ENCODE measurements at regions of chr12 and their contacts with region 1.

Region 1: DNA sequence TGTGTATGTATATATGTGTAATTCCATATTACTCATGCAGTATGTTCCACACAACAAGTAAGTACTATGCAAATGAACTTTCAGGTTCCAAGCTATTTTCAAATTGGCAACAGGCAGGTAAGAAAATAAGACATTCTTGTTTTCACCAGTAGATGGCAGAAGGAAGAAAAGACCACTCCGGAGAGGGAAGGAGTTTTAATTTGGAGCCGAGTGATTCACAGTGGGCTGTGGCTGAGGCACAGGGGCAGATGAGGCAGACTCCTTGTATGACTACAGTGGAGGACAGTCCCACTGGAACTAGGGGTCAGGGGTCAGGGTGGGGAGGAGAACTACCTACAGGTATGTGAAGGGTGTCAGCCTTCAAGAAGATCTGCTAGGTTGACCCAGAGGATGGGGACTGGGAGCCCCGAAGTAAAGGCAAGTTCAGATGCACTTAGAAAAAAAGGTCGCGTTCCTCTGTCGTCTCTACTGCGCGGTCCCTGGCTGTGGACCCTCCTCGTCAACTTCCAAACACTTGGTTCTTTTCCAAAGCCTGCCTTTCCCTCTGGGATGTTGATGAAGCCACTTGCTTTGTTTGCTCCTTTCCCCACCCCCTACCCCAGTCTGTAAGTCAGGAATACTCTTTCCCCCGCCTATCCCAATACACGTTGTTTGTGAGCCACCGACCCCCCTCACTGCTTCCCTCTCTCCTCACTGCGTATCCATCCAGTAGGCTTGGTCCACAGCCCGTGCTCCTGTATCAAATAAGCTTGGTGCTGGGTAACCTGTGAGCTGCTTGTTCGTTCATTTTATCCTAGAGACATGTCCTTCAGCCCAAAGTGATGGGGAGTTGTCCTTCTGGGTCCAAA is 24.1 kb downstream of the DDX47 start:
- DNase-seq: peak; percentile 83
- H3K4me3 Mint-ChIP-seq: no peak overlapping the region
- H3K27ac Mint-ChIP-seq: peak overlapping the region; percentile 30
- H3K4me1 Mint-ChIP-seq: peaks cover 56% of the 10 kb centered on the region
- H3K27me3 Mint-ChIP-seq: no peaks in the 10 kb centered on the region
- CTCF ChIP-seq: peak; percentile 62

Region 2: DNA sequence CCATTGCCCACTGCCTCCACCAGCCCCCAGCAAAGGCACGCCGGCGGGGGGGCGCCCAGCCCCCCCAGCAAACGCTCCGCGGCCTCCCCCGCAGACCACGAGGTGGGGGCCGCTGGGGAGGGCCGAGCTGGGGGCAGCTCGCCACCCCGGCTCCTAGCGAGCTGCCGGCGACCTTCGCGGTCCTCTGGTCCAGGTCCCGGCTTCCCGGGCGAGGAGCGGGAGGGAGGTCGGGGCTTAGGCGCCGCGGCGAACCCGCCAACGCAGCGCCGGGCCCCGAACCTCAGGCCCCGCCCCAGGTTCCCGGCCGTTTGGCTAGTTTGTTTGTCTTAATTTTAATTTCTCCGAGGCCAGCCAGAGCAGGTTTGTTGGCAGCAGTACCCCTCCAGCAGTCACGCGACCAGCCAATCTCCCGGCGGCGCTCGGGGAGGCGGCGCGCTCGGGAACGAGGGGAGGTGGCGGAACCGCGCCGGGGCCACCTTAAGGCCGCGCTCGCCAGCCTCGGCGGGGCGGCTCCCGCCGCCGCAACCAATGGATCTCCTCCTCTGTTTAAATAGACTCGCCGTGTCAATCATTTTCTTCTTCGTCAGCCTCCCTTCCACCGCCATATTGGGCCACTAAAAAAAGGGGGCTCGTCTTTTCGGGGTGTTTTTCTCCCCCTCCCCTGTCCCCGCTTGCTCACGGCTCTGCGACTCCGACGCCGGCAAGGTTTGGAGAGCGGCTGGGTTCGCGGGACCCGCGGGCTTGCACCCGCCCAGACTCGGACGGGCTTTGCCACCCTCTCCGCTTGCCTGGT is 120.3 kb before region 1 on chr12 and contains the start of gene CDKN1B:
- CTCF ChIA-PET with region 1: interaction called, 3 read pairs
- POLR2A ChIA-PET with region 1: interaction called, 11 read pairs
- intact Hi-C with region 1: no loop called
- DNase-seq: peak; percentile 96
- H3K4me3 Mint-ChIP-seq: peak within 1 kb of the TSS; percentile 98
- H3K27ac Mint-ChIP-seq: peak within 1 kb of the TSS; percentile 99
- H3K4me1 Mint-ChIP-seq: peaks cover 29% of the 10 kb centered on the region
- H3K27me3 Mint-ChIP-seq: no peaks in the 10 kb centered on the region
- CTCF ChIP-seq: no peak
- total RNA-seq, gene CDKN1B: 33.9 and 41.6 TPM in 2 replicates

Region 3: GRCh38 chr12:12813120-12814101 is 23.8 kb before region 1 on chr12 and contains the start of gene DDX47:
- CTCF ChIA-PET with region 1: interaction called, 12 read pairs
- POLR2A ChIA-PET with region 1: interaction called, 33 read pairs
- intact Hi-C with region 1: no loop called
- DNase-seq: peak; percentile 92
- H3K4me3 Mint-ChIP-seq: peak within 1 kb of the TSS; percentile 99
- H3K27ac Mint-ChIP-seq: peak within 1 kb of the TSS; percentile 99
- H3K4me1 Mint-ChIP-seq: peaks cover 27% of the 10 kb centered on the region
- H3K27me3 Mint-ChIP-seq: no peaks in the 10 kb centered on the region
- CTCF ChIP-seq: peak; percentile 90
- total RNA-seq, gene DDX47: 47.0 and 47.7 TPM in 2 replicates

Region 4: DNA sequence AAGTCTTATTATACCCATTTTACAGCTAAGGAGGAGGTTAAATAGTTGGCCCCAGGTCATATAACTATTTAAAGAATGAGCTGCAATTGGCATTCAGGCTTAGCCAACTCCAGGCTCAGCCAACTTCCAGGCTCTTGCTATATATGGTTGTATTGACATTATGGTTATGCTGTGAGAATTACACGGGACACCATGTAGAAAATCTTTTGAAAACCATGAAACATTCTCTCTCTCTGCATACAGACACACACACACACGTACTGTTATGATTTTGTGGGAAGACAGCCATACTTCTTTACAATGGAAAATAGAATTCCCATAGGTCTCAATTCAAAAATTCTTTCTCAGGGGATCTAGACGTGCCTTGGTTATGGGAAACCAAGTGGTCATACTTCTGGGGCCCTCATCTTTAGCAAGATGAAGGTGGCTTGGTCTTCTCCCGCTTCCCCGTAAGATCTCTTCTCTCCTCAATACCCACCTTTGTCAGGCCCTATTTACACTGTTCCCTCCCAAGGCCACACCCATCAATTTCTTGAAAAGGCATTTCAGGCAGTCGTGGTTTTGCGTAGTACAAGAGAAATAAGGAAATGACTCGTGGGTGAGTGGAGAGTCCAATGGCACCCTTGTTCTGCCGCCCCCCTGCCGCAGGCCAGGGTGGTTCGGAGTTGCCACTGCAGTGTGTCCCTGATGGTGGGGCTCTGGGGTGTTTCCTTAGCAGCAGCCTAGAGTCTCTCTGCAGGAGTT is 44.1 kb after region 1 on chr12:
- CTCF ChIA-PET with region 1: interaction called, 22 read pairs
- POLR2A ChIA-PET with region 1: interaction called, 22 read pairs
- intact Hi-C with region 1: no loop called
- DNase-seq: peak; percentile 68
- H3K4me3 Mint-ChIP-seq: peak overlapping the region; percentile 45
- H3K27ac Mint-ChIP-seq: peak overlapping the region; percentile 97
- H3K4me1 Mint-ChIP-seq: peaks cover 43% of the 10 kb centered on the region
- H3K27me3 Mint-ChIP-seq: no peaks in the 10 kb centered on the region
- CTCF ChIP-seq: no peak

Region 5: GRCh38 chr12:12899530-12900380 is 62.5 kb after region 1 on chr12:
- CTCF ChIA-PET with region 1: interaction called, 11 read pairs
- POLR2A ChIA-PET with region 1: interaction called, 72 read pairs
- intact Hi-C with region 1: no loop called
- DNase-seq: peak; percentile 93
- H3K4me3 Mint-ChIP-seq: peak overlapping the region; percentile 68
- H3K27ac Mint-ChIP-seq: peak overlapping the region; percentile 86
- H3K4me1 Mint-ChIP-seq: peaks cover 50% of the 10 kb centered on the region
- H3K27me3 Mint-ChIP-seq: no peaks in the 10 kb centered on the region
- CTCF ChIP-seq: no peak

Region 6: DNA sequence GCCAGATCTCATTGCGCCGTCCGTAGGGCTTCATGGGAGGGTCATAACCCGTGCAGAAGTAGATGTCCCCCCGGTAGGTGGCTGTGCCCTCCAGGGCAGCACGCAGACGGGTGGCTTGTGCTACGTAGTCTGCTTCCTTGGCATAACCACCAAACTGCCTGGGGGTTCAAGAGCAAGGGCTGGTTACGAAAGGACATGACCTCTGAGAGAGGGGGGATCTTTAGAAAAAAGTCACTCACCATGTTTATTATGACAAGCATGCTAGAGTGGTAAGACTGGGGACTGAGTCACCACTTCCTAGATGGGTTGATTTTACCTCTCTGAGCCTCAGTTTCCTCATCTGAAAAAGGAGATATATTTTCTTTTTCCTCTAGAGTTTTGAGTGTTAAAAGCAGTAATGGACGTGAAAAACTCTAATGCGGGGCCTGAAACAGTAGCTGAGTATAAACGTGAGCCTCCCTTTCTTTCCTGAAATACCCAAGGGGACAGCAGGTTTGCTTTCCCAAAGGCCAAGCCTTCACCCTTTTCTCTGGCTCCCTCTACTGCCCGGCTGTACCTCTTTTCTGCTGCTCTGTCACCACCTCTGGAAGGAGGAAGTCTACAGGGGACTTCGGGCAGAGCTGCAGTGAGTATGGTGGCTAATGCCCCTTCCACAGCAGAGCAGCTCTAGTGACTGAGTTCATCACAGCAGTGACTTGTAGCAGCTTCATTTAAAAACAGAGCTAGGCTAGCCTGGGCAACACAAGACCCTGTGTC is 138.3 kb after region 1 on chr12:
- CTCF ChIA-PET with region 1: interaction called, 21 read pairs
- POLR2A ChIA-PET with region 1: interaction called, 14 read pairs
- intact Hi-C with region 1: loop called (anchors 5 kb)
- DNase-seq: peak; percentile 55
- H3K4me3 Mint-ChIP-seq: no peak overlapping the region
- H3K27ac Mint-ChIP-seq: peak overlapping the region; percentile 85
- H3K4me1 Mint-ChIP-seq: peaks cover 12% of the 10 kb centered on the region
- H3K27me3 Mint-ChIP-seq: no peaks in the 10 kb centered on the region
- CTCF ChIP-seq: peak; percentile 23

Measured in MCF 10A (cell line).